Psoas muscle (tissue), 8 donors: ENCODE measurements at regions of chr3 and their contacts with region 1.

Region 1: GRCh38 chr3:20185701-20186598 is at the start of gene SGO1:
- DNase-seq: peak; percentile 99 to 100
- ATAC-seq: peak; percentile 100
- H3K4me3 ChIP-seq: peak within 1 kb of the TSS; percentile 74
- H3K27ac ChIP-seq: peak within 1 kb of the TSS; percentile 87
- H3K4me1 ChIP-seq: peaks cover 9% of the 10 kb centered on the region
- H3K27me3 ChIP-seq: no peaks in the 10 kb centered on the region
- CTCF ChIP-seq: no peak
- total RNA-seq, gene SGO1: not detected

Region 2: GRCh38 chr3:19946832-19947548 is 239.0 kb before region 1 on chr3 and contains the start of gene RAB5A:
- intact Hi-C with region 1: loop called (anchors 5 kb)
- DNase-seq: peak; percentile 97 to 98
- ATAC-seq: peak; percentile 95 to 98 (median 97)
- H3K4me3 ChIP-seq: peak within 1 kb of the TSS; percentile 89
- H3K27ac ChIP-seq: peak within 1 kb of the TSS; percentile 100
- H3K4me1 ChIP-seq: peaks cover 36% of the 10 kb centered on the region
- H3K27me3 ChIP-seq: no peaks in the 10 kb centered on the region
- CTCF ChIP-seq: no peak
- total RNA-seq, gene RAB5A: 38.5 to 62.3 (median 54.9) TPM

Region 3: GRCh38 chr3:20023623-20024405 is 162.1 kb before region 1 on chr3:
- intact Hi-C with region 1: no loop called
- DNase-seq: no peak
- ATAC-seq: peak in 2 of 4 donors; percentile 40
- H3K4me3 ChIP-seq: no peak overlapping the region
- H3K27ac ChIP-seq: peak overlapping the region; percentile 42
- H3K4me1 ChIP-seq: no peaks in the 10 kb centered on the region
- H3K27me3 ChIP-seq: no peaks in the 10 kb centered on the region
- CTCF ChIP-seq: no peak

Region 4: GRCh38 chr3:20141851-20142250 is 44.1 kb before region 1 on chr3:
- intact Hi-C with region 1: loop called (anchors 5 kb)
- DNase-seq: peak; percentile 21 to 70
- ATAC-seq: peak; percentile 75 to 95 (median 91)
- H3K4me3 ChIP-seq: no peak overlapping the region
- H3K27ac ChIP-seq: no peak overlapping the region
- H3K4me1 ChIP-seq: no peaks in the 10 kb centered on the region
- H3K27me3 ChIP-seq: no peaks in the 10 kb centered on the region
- CTCF ChIP-seq: no peak

Region 5: GRCh38 chr3:20425138-20425537 is 239.2 kb after region 1 on chr3:
- intact Hi-C with region 1: no loop called
- DNase-seq: no peak
- ATAC-seq: no peak
- H3K4me3 ChIP-seq: no peak overlapping the region
- H3K27ac ChIP-seq: no peak overlapping the region
- H3K4me1 ChIP-seq: no peaks in the 10 kb centered on the region
- H3K27me3 ChIP-seq: no peaks in the 10 kb centered on the region
- CTCF ChIP-seq: no peak